ENCODE measurements at regions of chr19 and their contacts with region 1.

Region 1: GRCh38 chr19:18322759-18323460 is at the start of gene LSM4:
- DNase-seq: peak; percentile 98 to 99
- ATAC-seq: peak; percentile 98
- H3K4me3 ChIP-seq: peak within 1 kb of the TSS; percentile 14 to 44
- H3K27ac ChIP-seq: peak within 1 kb of the TSS; percentile 74 to 78
- H3K4me1 ChIP-seq: peaks cover 0 to 4% of the 10 kb centered on the region in 2 donors
- H3K27me3 ChIP-seq: no peaks in the 10 kb centered on the region
- total RNA-seq, gene LSM4: 32.2 to 34.5 TPM

Region 2: GRCh38 chr19:18091217-18091608 is 231.7 kb before region 1 on chr19:
- intact Hi-C with region 1: no loop called
- DNase-seq: peak in 1 of 2 donors; percentile 84
- ATAC-seq: peak; percentile 15
- H3K4me3 ChIP-seq: no peak overlapping the region
- H3K27ac ChIP-seq: no peak overlapping the region
- H3K4me1 ChIP-seq: no peaks in the 10 kb centered on the region
- H3K27me3 ChIP-seq: no peaks in the 10 kb centered on the region

Region 3: DNA sequence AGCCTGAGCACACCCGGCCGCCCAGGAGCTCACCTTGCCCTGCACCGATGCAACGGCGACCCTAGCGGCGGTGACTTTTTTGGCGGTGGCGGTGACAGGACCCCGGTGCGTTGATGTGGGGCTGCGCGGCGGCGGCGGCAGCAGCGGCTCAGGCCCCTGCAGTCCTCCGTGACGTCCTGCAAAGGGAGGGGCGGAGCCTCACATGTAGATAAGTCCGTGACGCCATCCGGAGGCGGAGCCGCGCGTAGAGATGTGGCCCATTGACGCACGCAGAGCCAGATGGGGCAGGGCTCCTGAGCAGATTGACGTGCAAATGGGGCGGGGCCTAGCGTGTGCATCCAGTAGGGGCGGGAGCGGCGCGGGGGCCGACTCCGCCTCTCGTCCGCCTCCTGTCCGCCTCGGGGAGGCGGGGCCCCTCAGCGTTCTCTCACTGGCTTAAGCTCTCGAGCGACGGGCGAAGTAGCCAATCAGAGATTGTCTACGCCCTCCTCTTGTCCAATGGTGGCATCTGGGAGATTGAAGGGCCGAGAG is 119.0 kb before region 1 on chr19 and contains the start of gene RAB3A:
- intact Hi-C with region 1: loop called in 1 of 2 experiments (anchors 5 kb)
- DNase-seq: peak; percentile 100
- ATAC-seq: peak; percentile 98
- H3K4me3 ChIP-seq: peak within 1 kb of the TSS; percentile 41 to 66
- H3K27ac ChIP-seq: peak within 1 kb of the TSS; percentile 72 to 87
- H3K4me1 ChIP-seq: peaks cover 0 to 3% of the 10 kb centered on the region in 2 donors
- H3K27me3 ChIP-seq: no peaks in the 10 kb centered on the region
- total RNA-seq, gene RAB3A: 3.4 to 3.8 TPM

Region 4: DNA sequence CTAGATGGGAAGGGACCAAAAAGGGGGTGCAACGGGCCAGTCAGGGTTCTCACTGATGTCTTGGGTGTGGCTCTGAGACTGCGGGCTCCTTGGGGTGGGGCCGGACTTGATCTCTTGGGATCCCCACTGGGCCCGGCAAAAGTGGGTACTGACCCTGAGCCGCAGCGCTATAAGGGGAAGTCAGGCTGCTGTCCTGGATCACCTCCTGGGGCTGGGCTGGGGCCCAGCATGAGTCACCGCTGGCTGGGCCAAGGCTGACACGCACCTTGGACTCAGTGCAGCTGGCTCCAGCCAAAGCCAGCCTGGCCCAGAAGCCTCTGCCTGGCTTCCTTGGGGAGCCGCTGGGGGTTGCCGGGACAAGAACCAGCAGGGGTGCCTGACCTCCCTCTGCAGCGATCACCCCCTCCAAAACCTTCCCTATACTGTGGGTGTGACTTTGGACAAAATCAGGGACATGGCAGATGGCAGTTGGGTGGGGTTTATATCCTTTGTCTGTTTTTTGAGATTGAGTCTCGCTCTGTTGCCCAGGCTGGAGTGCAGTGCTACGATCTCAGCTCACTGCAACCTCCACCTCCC is 48.0 kb before region 1 on chr19:
- intact Hi-C with region 1: loop called (anchors 1 to 5 kb)
- DNase-seq: peak; percentile 90 to 94
- ATAC-seq: peak; percentile 81
- H3K4me3 ChIP-seq: no peak overlapping the region
- H3K27ac ChIP-seq: peak overlapping the region in 1 of 2 donors; percentile 14
- H3K4me1 ChIP-seq: peaks cover 0 to 2% of the 10 kb centered on the region in 2 donors
- H3K27me3 ChIP-seq: no peaks in the 10 kb centered on the region

Region 5: GRCh38 chr19:18281082-18282020 is 41.6 kb before region 1 on chr19 and contains the start of gene JUND:
- intact Hi-C with region 1: loop called (anchors 1 to 5 kb)
- DNase-seq: peak; percentile 99
- ATAC-seq: peak; percentile 83
- H3K4me3 ChIP-seq: peak within 1 kb of the TSS; percentile 77 to 97
- H3K27ac ChIP-seq: peak within 1 kb of the TSS; percentile 95 to 100
- H3K4me1 ChIP-seq: no peaks in the 10 kb centered on the region
- H3K27me3 ChIP-seq: no peaks in the 10 kb centered on the region
- total RNA-seq, gene JUND: 214 to 492 TPM

Region 6: GRCh38 chr19:18364826-18365528 is 42.1 kb after region 1 on chr19:
- intact Hi-C with region 1: no loop called
- DNase-seq: peak; percentile 84
- ATAC-seq: peak; percentile 74
- H3K4me3 ChIP-seq: no peak overlapping the region
- H3K27ac ChIP-seq: peak overlapping the region in 1 of 2 donors; percentile 58
- H3K4me1 ChIP-seq: no peaks in the 10 kb centered on the region
- H3K27me3 ChIP-seq: no peaks in the 10 kb centered on the region